Esophagus muscularis mucosa (tissue), 4 donors: ENCODE measurements at regions of chr6 and their contacts with region 1.

Region 1: GRCh38 chr6:109059571-109060021 is 35.0 kb downstream of the SESN1 start:
- DNase-seq: no peak
- H3K4me3 ChIP-seq: peak overlapping the region in 1 of 4 donors; percentile 3
- H3K27ac ChIP-seq: peak overlapping the region; percentile 54 to 69 (median 65)
- H3K4me1 ChIP-seq: peaks cover 44 to 96% (median 79%) of the 10 kb centered on the region in 4 donors
- H3K27me3 ChIP-seq: no peaks in the 10 kb centered on the region
- CTCF ChIP-seq: peak in 1 of 3 experiments; percentile 45
- EP300 ChIP-seq: no peak
- POLR2A ChIP-seq: no peak

Region 2: GRCh38 chr6:109009236-109009961 is 50.2 kb before region 1 on chr6:
- intact Hi-C with region 1: loop called (anchors 5 kb)
- DNase-seq: peak; percentile 96
- H3K4me3 ChIP-seq: peak overlapping the region; percentile 88 to 95 (median 92)
- H3K27ac ChIP-seq: peak overlapping the region; percentile 97
- H3K4me1 ChIP-seq: peaks cover 26 to 68% (median 48%) of the 10 kb centered on the region in 4 donors
- H3K27me3 ChIP-seq: no peaks in the 10 kb centered on the region
- CTCF ChIP-seq: peak in 2 of 3 experiments; percentile 21 to 43
- EP300 ChIP-seq: no peak
- POLR2A ChIP-seq: peak; percentile 40